ENCODE measurements at regions of chr4 and their contacts with region 1.

Region 1: DNA sequence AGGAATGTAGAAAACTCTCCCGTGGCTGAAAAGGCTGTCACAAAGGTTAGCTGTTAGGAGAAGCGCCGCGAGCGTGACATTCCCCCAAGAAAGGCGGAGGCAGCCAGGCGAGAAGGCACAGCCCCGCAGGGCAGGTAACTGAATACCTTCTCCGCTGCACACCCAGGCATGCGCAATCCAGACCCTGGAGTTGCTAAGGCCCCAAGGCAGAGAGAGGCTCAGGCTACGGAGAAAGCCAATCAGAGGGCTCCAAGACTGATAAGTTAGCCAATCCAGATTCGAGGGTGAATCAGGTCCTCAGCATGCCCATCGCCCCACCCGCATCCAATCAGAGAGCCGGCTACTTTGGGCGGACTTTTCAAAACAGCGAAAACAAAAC is 485 bp upstream of the CCNG2 start:
- DNase-seq: peak; percentile 95
- H3K4me3 Mint-ChIP-seq: peak overlapping the region; percentile 95
- H3K27ac Mint-ChIP-seq: peak overlapping the region; percentile 96
- H3K4me1 Mint-ChIP-seq: peaks cover 35% of the 10 kb centered on the region
- H3K27me3 Mint-ChIP-seq: no peaks in the 10 kb centered on the region

Region 2: DNA sequence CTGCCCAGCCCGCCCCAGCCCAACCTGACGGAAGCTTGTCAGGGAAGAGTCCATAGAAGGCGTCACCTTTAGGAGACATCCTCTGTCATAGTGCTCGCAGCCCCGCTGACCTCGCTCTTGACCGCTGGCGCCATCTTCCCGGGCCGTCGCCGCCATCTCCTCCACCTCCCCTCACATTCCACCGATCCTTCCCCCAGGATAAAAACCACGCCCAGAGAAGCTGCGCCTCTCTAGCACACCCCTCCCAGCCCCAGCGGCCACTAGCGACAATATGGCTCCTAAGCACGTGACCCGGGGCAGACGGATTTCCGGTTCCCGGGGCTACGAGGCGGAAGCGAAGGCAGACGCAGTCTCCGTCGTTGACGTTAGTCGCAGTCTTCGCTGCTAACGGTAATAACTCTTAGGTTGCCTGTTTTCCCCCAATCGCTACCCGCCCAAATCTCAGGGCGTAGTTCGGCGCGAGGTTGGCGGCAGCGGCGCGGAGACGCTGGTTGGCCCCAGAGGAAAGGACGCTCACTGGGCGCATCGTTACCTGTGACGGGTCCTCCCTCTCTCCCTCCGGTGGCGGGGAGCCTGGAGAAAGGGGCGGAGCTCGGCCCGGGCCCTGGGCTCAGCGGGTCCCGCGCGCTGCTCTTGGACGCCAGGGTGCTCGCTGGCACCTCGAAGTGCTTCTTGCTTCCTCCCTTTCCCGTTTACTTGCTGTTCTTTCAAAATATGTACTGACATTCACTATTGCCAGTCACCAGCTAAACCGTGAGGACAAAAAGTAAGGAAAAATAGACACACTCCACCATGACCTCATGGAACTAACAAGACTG is 1642.2 kb before region 1 on chr4 and contains the starts of genes RCHY1 and THAP6:
- intact Hi-C with region 1: loop called (anchors 10 kb)
- DNase-seq: peak; percentile 90
- H3K4me3 Mint-ChIP-seq: no peak within 1 kb of the TSS
- H3K27ac Mint-ChIP-seq: peak within 1 kb of the TSS; percentile 100
- H3K4me1 Mint-ChIP-seq: peaks cover 47% of the 10 kb centered on the region
- H3K27me3 Mint-ChIP-seq: no peaks in the 10 kb centered on the region
- total RNA-seq, gene RCHY1: 25.0 and 25.6 TPM in 2 replicates
- total RNA-seq, gene THAP6: 16.3 and 17.3 TPM in 2 replicates

Region 3: GRCh38 chr4:75989846-75990528 is 1166.5 kb before region 1 on chr4:
- intact Hi-C with region 1: loop called (anchors 2 kb)
- DNase-seq: no peak
- H3K4me3 Mint-ChIP-seq: peak overlapping the region; percentile 93
- H3K27ac Mint-ChIP-seq: peak overlapping the region; percentile 83
- H3K4me1 Mint-ChIP-seq: peaks cover 27% of the 10 kb centered on the region
- H3K27me3 Mint-ChIP-seq: no peaks in the 10 kb centered on the region

Region 4: DNA sequence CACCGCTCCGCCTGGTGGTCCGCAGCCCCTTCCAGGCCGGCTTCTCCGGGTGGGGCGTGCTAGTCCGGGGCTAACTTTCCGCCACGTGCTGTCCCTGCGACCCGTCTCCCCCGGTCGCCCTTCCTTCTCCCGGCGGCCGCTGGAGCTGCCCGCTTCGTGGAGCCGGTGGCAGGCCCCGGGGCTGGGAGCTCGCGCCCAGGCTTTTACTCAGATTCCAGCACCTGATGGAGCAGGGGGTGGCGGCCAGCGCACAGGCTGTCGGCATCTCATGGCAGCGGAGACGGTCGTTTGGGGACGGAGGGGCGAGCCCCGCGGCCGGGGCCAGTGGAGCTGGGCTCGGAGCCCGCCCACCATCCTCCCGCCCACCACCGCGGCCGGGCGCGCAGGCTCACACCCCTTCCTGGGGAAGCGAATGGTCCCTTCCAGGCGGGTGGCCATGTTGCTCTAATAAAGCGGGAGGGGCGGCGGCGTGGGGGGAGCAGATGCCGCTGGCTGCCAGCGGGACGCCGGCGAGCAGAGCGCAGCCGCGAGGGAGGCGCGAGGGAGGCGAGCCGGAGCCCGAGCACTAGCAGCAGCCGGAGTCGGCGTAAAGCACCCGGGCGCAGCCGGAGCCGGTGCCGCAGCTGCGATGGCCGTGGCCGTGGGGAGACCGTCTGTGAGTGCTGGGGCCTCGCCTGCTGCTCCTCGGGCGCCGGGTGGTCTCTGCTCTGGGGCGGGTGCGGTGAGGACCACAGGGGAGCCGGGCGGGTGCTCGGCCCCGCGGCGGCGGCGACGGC is 207.1 kb before region 1 on chr4 and contains the start of gene SEPTIN11:
- intact Hi-C with region 1: loop called (anchors 2 kb)
- DNase-seq: peak; percentile 56
- H3K4me3 Mint-ChIP-seq: peak within 1 kb of the TSS; percentile 84
- H3K27ac Mint-ChIP-seq: peak within 1 kb of the TSS; percentile 68
- H3K4me1 Mint-ChIP-seq: peaks cover 14% of the 10 kb centered on the region
- H3K27me3 Mint-ChIP-seq: peaks cover 77% of the 10 kb centered on the region
- total RNA-seq, gene SEPTIN11: 22.4 and 23.6 TPM in 2 replicates

Region 5: DNA sequence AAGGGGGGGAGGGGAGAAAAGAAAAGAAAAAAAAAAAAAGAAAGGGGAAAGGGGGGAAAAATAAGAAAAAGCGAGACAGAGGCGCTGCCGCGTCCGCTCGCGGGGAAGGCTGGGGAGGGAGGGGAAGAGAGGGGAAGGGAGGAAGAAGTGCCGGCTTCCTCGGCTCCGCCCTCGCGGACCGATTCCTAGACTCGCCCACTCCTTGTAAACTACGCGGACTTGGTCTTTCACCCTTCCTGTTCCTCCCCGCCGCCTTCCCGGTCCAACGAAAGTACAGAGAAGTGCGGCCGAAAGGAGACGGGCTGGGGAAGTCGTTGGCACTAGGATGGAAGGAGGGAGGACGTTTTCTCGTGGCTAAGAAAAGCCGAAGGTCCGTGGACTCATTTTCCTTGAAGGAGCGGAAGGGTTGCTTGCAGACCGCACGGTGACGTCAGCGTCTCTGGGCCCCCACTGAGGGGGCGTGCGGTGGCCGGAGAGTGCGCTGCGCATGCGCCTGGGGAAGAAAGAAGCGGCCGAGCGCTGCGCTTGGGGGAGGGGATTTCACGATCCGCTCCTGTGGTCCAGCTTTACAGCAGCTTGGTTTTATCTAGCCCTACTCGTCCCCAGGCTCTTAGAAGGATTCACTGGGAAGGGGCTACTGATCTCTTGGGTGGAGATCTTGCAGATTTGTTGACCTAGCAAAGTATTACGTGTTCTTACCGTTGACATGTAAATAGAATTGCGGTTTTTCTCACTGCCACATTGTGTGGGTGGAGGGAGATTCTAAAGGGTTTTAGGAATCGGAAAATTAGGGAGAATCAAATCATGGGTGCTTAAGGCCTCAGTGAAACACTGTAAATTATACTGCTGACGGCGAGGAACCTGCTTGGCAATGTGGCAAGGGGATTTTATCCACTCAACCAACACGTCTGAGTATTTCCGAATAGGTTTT is 80.4 kb before region 1 on chr4 and contains the start of gene CCNI:
- intact Hi-C with region 1: loop called (anchors 1 kb)
- DNase-seq: peak; percentile 91
- H3K4me3 Mint-ChIP-seq: peak within 1 kb of the TSS; percentile 96
- H3K27ac Mint-ChIP-seq: peak within 1 kb of the TSS; percentile 100
- H3K4me1 Mint-ChIP-seq: peaks cover 42% of the 10 kb centered on the region
- H3K27me3 Mint-ChIP-seq: peaks cover 4% of the 10 kb centered on the region
- total RNA-seq, gene CCNI: 236 and 253 TPM in 2 replicates

Region 6: GRCh38 chr4:77203380-77204197 is 47.1 kb after region 1 on chr4:
- intact Hi-C with region 1: loop called (anchors 2 kb)
- DNase-seq: peak; percentile 47
- H3K4me3 Mint-ChIP-seq: no peak overlapping the region
- H3K27ac Mint-ChIP-seq: no peak overlapping the region
- H3K4me1 Mint-ChIP-seq: peaks cover 13% of the 10 kb centered on the region
- H3K27me3 Mint-ChIP-seq: peaks cover 15% of the 10 kb centered on the region

Measured in activated T-helper 1 cell treated with anti-CD3 and anti-CD28 coated beads, Interleukin-12 subunit alpha, Interleukin-12 subunit beta, Interleukin-2, Interleukin-4 antibody, amounts not matched to agents 30 ng/mL and 10 ng/mL and 1 ng/mL, durations not matched to agents 14 hours and 24 hours and 36 hours (primary cell).